MCF 10A (cell line): ENCODE measurements at regions of chr1 and their contacts with region 1.

Region 1: DNA sequence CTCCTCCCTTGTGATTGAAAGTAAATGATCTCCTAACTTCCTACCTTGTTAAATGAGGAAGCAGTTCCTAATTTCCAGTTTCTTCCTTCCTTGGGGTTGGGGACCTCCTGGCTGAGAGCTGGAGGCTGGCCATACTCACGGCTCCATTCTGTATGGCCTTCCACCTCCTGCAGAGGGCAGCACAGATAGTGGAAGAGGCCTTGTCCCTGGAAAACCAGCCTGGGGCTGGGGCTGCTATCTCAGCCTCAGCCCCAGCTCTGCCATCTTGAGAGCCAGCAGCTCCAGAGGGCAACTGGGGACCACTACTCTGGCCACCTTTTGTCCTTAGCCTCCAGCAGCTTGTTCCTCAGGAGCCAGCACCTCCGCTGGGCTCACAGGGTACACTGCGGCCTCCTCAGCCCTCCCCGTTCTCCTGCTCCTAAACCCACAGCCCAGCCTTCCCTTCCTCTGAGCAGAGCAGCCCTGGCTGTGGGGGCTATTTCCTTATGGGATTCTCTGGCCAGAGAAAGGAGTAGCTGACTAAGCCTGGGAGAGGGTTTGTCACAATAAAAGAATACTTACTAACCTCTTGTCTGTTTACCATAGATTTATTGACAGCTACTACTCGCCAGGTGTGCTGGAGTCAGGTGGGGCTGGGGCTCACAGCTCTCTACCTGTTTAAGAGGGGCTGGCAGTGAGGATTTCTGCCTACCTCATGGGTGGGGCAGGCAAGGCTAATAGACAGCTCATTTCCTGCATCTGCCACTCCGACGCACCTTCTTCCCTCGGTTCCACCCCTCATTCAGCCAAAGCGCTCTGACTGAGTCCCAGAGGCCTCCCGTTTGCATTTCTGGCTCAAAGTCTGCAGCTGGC is 6.3 kb downstream of the TMEM234 start:
- DNase-seq: peak; percentile 75
- H3K4me3 Mint-ChIP-seq: no peak overlapping the region
- H3K27ac Mint-ChIP-seq: peak overlapping the region; percentile 54
- H3K4me1 Mint-ChIP-seq: peaks cover 1% of the 10 kb centered on the region
- H3K27me3 Mint-ChIP-seq: no peaks in the 10 kb centered on the region
- CTCF ChIP-seq: peak; percentile 79

Region 2: DNA sequence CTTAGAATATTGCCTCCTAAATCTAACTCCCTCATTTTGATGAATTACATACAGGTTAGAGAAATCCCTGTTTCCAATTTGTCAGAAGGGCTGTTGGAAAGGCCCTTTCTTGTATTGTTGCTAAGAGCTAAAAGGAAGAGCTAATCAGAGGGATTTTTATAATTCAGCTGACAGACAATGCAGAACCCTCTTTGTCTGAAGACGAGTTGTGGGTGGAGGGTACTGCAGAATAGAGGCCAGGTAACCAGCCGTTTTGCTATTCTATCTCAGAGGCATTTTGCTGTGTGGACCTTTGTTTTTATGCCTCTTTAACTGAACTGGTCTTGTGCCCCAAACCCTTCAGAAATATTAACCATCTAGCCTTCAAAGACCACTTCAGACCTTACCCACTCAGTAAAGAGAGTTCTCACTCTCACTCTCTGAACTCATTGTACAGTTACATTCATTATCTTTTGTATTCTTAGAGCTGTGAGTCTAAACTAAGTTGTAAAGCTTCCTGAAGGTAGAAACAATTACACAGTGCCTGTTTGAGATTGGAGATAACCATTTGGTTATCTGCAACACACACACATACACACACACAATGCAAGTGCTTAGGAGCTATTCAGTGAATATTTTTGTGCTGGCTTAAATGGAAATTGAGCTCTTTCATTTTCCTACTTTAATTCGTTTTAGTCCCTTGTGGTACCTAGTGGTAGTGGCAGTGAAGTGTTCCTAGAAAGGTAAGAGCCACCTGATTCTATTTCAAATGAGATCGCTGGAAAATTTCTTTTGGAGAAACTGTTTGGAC is 88.3 kb before region 1 on chr1:
- CTCF ChIA-PET with region 1: no interaction called
- POLR2A ChIA-PET with region 1: no interaction called
- intact Hi-C with region 1: no loop called
- DNase-seq: no peak
- H3K4me3 Mint-ChIP-seq: no peak overlapping the region
- H3K27ac Mint-ChIP-seq: no peak overlapping the region
- H3K4me1 Mint-ChIP-seq: peaks cover 20% of the 10 kb centered on the region
- H3K27me3 Mint-ChIP-seq: no peaks in the 10 kb centered on the region
- CTCF ChIP-seq: no peak

Region 3: DNA sequence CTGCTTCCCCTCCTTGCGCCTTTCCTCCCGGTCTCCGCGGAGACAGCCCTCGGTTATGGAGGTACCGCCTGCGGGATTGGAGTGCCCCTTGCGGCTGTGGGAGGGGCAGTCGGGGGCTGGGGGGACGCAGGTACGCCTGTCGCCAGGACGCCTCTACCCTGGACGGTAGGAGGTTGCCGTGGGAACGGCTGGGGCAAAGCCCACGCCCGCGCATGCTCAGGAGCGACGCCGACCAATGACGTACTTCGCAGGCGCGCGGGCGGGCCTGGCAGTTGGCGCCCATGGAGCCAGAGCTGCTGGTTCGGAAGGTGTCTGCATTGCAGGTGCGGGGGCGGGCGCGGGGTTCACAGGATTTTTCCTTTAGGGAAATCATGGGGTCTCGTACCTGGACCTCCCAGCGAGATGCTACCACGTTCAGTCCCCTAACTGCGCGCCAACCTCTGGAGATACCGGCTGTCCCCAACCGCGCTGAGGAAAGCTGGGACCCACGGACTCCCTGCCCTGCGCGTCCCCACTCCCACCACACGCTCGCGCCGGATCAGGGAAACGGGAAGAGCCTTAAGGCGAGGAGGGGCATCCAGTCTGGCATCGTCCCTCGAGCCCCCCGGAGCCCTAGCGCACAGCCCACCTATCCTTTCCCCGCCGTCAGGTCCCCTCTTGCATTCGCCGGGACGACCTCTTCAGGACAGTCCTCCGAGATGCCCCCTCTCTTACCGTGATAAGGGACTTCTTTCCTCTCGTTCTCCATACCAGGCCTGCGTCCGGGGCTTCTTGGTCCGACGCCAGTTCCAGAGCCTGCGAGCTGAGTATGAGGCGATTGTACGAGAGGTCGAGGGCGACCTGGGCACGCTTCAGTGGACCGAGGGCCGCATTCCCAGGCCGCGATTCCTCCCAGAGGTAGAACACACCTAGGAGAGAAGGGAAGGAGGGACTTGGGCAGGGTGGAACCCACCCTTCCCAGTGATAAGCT is 10.2 kb before region 1 on chr1 and contains the start of gene IQCC:
- CTCF ChIA-PET with region 1: interaction called, 12 read pairs
- POLR2A ChIA-PET with region 1: interaction called, 19 read pairs
- intact Hi-C with region 1: no loop called
- DNase-seq: peak; percentile 83
- H3K4me3 Mint-ChIP-seq: peak within 1 kb of the TSS; percentile 78
- H3K27ac Mint-ChIP-seq: peak within 1 kb of the TSS; percentile 95
- H3K4me1 Mint-ChIP-seq: peaks cover 15% of the 10 kb centered on the region
- H3K27me3 Mint-ChIP-seq: no peaks in the 10 kb centered on the region
- CTCF ChIP-seq: no peak
- total RNA-seq, gene IQCC: 1.8 and 1.9 TPM in 2 replicates

Region 4: DNA sequence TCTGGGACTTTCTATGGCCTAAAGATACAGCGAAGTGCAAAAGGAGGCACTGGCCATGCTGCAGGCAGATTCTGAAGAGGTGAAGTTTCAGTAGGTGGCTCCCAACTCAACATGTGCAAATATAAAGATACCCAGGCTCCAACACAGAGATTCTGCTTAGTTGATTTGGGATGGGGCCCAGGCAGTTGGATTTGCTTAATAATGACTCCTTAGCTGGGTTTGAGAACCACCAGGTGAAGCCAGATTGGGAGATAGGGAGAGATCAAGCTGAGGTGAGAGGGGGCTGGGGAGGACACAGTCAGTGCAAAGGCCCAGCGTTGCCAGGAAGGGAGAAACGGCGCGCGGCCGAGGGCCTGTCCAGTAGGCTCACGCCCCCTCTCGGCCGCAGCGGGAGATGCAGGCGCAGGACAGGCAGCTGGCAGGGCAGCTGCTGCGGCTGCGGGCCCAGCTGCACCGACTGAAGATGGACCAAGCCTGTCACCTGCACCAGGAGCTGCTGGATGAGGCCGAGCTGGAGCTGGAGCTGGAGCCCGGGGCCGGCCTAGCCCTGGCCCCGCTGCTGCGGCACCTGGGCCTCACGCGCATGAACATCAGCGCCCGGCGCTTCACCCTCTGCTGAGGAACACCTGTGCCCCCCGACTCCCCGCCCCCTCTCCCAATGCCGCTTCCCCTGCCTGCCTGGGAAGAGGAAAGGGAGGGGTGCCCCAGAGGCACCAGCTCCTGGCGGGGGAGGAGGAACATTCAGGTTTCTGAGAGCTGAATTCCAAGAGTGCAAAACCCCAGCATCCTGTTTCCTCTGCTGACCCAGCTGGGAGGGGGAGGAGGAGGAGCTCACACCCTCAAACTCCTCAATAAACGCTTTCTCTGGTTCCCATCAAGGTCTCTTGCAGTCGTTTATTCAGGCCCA is 32.4 kb after region 1 on chr1:
- CTCF ChIA-PET with region 1: interaction called, 14 read pairs
- POLR2A ChIA-PET with region 1: interaction called, 3 read pairs
- intact Hi-C with region 1: no loop called
- DNase-seq: peak; percentile 69
- H3K4me3 Mint-ChIP-seq: no peak overlapping the region
- H3K27ac Mint-ChIP-seq: no peak overlapping the region
- H3K4me1 Mint-ChIP-seq: peaks cover 7% of the 10 kb centered on the region
- H3K27me3 Mint-ChIP-seq: no peaks in the 10 kb centered on the region
- CTCF ChIP-seq: peak; percentile 77

Region 5: DNA sequence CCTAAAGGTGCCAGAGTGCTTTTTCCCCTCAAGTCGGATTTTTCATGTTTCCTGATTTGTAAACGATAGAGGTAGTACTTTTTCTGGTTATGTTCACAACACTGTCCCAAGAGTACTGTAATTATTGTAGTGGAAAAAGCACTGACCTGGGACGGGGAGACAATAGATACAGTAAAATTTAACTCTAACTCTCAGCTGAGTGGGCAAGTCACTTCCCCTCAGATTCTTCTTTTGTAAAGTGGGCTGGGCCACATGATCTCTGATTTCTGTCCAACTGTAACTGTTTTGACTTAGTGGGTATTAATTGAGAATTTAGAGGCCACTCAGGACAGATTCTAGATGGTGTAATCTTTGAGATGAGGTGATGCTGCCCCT is 101.0 kb after region 1 on chr1:
- CTCF ChIA-PET with region 1: interaction called, 24 read pairs
- POLR2A ChIA-PET with region 1: interaction called, 3 read pairs
- intact Hi-C with region 1: loop called (anchors 1 kb)
- DNase-seq: no peak
- H3K4me3 Mint-ChIP-seq: no peak overlapping the region
- H3K27ac Mint-ChIP-seq: no peak overlapping the region
- H3K4me1 Mint-ChIP-seq: peaks cover 6% of the 10 kb centered on the region
- H3K27me3 Mint-ChIP-seq: no peaks in the 10 kb centered on the region
- CTCF ChIP-seq: no peak

Region 6: GRCh38 chr1:32413507-32414185 is 197.8 kb after region 1 on chr1:
- CTCF ChIA-PET with region 1: interaction called, 3 read pairs
- POLR2A ChIA-PET with region 1: no interaction called
- intact Hi-C with region 1: loop called (anchors 1 kb)
- DNase-seq: peak; percentile 84
- H3K4me3 Mint-ChIP-seq: no peak overlapping the region
- H3K27ac Mint-ChIP-seq: no peak overlapping the region
- H3K4me1 Mint-ChIP-seq: no peaks in the 10 kb centered on the region
- H3K27me3 Mint-ChIP-seq: no peaks in the 10 kb centered on the region
- CTCF ChIP-seq: peak; percentile 60